GM13976 (cell line): ENCODE measurements at regions of chr1 and their contacts with region 1.

Region 1: DNA sequence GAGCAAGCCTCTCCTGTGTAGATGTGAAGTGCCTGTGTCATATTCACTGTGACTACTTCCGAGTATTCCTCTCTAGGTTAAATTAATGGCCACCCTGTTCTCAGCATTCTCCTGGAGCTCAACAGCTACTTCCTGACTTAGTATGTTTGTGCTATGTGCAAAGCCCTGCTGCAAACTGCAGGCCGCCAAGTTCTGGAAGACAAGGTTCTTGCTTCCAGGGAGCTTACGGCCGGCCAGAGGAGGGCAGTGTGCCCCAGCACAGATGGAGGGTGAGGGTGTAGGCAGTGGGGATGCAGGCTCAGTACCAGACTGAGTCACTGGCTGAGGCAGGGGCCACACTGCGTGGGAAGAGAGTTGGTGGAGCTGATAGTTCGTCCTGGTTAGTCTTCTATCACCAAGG is 43.2 kb downstream of the ELK4 start:
- DNase-seq: no peak
- CTCF ChIP-seq: peak; percentile 45

Region 2: GRCh38 chr1:205631727-205632373 is 43.2 kb after region 1 on chr1 and contains the start of gene ELK4:
- in situ Hi-C with region 1: loop called (anchors 5 kb)
- DNase-seq: peak; percentile 98
- CTCF ChIP-seq: peak; percentile 83

Region 3: GRCh38 chr1:205658943-205659581 is 70.4 kb after region 1 on chr1:
- in situ Hi-C with region 1: no loop called
- DNase-seq: peak; percentile 90
- CTCF ChIP-seq: peak; percentile 89

Region 4: GRCh38 chr1:205711104-205712020 is 122.7 kb after region 1 on chr1:
- in situ Hi-C with region 1: no loop called
- DNase-seq: peak; percentile 65
- CTCF ChIP-seq: peak; percentile 81

Region 5: GRCh38 chr1:205766038-205766437 is 177.4 kb after region 1 on chr1:
- in situ Hi-C with region 1: no loop called
- DNase-seq: no peak
- CTCF ChIP-seq: no peak

Region 6: DNA sequence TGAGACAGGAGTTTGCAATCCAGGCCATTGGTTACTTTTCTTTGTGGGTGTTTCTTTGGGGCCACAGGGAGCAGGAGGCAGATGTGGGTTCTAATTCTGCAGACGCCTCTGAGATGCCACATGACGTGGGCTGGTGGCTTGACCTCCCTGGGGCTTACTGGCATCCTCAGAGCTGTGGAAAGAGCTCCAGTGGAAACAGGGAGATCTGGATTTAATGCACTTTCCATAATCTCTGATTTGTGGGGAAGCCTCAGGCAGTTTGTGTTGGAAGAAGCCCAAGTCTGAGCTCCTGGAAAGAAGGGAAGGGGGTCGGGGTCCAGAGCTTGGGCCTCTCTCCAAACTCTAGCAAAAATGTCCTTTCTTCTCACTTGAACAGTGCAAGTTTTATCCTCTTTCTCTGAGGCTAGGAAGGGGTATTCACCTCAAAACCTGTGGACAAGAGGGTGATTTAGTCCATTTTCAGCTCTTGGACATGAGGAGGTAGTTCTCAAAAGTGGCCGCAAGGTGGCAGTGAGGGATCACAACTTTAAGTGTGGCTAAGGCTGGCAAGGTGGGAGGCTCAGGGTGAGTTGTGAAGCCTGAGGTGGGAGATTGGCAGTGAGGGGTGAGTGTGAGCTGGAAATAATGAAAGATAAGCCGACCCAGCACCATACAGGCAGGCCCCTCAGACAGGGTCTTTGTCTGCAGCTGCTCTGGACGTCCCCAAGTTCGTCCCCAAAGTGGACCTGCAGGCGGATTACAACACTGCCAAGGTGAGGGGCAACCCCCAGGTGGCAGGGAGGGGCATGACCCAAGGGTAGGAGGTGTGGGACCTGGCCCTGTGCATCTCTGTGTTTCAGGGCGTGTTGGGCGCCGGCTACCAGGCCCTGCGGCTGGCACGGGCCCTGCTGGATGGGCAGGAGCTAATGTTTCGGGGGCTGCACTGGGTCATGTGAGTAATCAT is 890.8 kb after region 1 on chr1:
- in situ Hi-C with region 1: no loop called
- DNase-seq: peak; percentile 87
- CTCF ChIP-seq: peak; percentile 66